Ascending aorta (tissue), 2 donors: ENCODE measurements at regions of chr7 and their contacts with region 1.

Region 1: GRCh38 chr7:80826520-80827238 is 92.2 kb downstream of the SEMA3C start:
- DNase-seq: no peak
- H3K4me3 ChIP-seq: no peak overlapping the region
- H3K27ac ChIP-seq: no peak overlapping the region
- H3K4me1 ChIP-seq: no peaks in the 10 kb centered on the region
- H3K27me3 ChIP-seq: no peaks in the 10 kb centered on the region
- CTCF ChIP-seq: no peak

Region 2: GRCh38 chr7:80869821-80870751 is 43.4 kb after region 1 on chr7:
- intact Hi-C with region 1: loop called (anchors 5 kb)
- DNase-seq: no peak
- H3K4me3 ChIP-seq: no peak overlapping the region
- H3K27ac ChIP-seq: peak overlapping the region in 1 of 2 donors; percentile 12
- H3K4me1 ChIP-seq: peaks cover 0 to 5% of the 10 kb centered on the region in 2 donors
- H3K27me3 ChIP-seq: no peaks in the 10 kb centered on the region
- CTCF ChIP-seq: no peak